HepG2 (cell line): ENCODE measurements at regions of chr1 and their contacts with region 1.

Region 1: DNA sequence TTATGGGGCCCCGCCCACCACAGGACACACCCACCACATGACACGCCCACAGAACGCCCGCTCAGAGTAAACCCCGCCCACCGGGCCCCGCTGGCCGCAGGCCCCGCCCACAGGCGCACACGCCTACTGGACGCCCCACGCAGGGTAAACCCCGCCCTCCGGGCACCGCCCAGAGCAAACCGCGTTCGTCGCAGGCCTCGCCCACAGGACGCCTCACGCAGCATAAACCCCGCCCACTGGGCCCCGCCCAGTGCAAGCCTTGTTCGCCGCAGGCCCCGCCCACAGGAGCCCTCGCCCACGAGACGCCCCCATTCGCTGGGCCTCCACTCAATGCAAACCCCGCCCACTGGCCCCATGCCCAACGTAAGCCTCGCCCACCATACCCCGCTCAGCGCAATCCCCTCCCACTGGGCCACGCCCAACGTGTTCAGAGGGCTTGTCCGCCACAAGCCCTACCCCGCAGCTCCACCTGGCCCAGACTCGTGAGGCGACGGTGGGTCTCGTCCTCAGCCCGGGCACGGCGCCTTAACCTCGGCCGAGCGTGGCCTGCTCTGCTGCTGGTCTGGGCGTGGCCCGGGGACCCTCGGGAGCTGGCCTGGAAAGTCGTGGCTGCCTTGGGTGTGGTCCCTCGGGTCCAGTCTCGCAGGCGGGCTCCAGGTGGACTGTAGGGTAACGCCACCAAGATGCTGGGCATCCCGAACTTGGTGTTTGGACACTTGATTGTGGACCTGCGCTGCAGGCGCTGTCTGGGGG is 401 bp upstream of the TMEM52 start:
- DNase-seq: peak; percentile 96
- ATAC-seq: peak; percentile 65
- H3K4me3 ChIP-seq: peak overlapping the region; percentile 49 to 75 (median 59); a peak in 5 of 6 replicates
- H3K27ac ChIP-seq: peak overlapping the region; percentile 70
- H3K4me1 ChIP-seq: peaks cover 65% of the 10 kb centered on the region
- H3K27me3 ChIP-seq: peaks cover 6 to 10% of the 10 kb centered on the region in 2 experiments; a peak in 4 of 5 replicates
- CTCF ChIP-seq: peak; percentile 31
- EP300 ChIP-seq: no peak
- POLR2A ChIP-seq: no peak
- RAD21 ChIP-seq: no peak

Region 2: GRCh38 chr1:1943834-1944570 is 24.5 kb after region 1 on chr1:
- CTCF ChIA-PET with region 1: no interaction called
- POLR2A ChIA-PET with region 1: interaction called, 55 read pairs
- in situ Hi-C with region 1: no loop called
- intact Hi-C with region 1: no loop called
- DNase-seq: peak; percentile 61
- ATAC-seq: peak; percentile 77
- H3K4me3 ChIP-seq: peak overlapping the region; percentile 67 to 87 (median 67)
- H3K27ac ChIP-seq: peak overlapping the region; percentile 91
- H3K4me1 ChIP-seq: peaks cover 80% of the 10 kb centered on the region
- H3K27me3 ChIP-seq: no peaks in the 10 kb centered on the region
- CTCF ChIP-seq: peak; percentile 100
- EP300 ChIP-seq: no peak
- POLR2A ChIP-seq: no peak
- RAD21 ChIP-seq: peak; percentile 70

Region 3: GRCh38 chr1:2085080-2085479 is 165.6 kb after region 1 on chr1:
- CTCF ChIA-PET with region 1: no interaction called
- POLR2A ChIA-PET with region 1: no interaction called
- in situ Hi-C with region 1: no loop called
- intact Hi-C with region 1: no loop called
- DNase-seq: no peak
- ATAC-seq: no peak
- H3K4me3 ChIP-seq: no peak overlapping the region
- H3K27ac ChIP-seq: no peak overlapping the region
- H3K4me1 ChIP-seq: no peaks in the 10 kb centered on the region
- H3K27me3 ChIP-seq: no peaks in the 10 kb centered on the region
- CTCF ChIP-seq: no peak
- EP300 ChIP-seq: no peak
- POLR2A ChIP-seq: no peak
- RAD21 ChIP-seq: no peak